Activated naive CD4-positive, alpha-beta T cell treated with anti-CD3 and anti-CD28 coated beads for 36 hours (primary cell): ENCODE measurements at regions of chr1 and their contacts with region 1.

Region 1: GRCh38 chr1:200336111-200336845 is 73.6 kb downstream of the ZNF281 start:
- DNase-seq: no peak
- H3K4me3 Mint-ChIP-seq: no peak overlapping the region
- H3K27ac Mint-ChIP-seq: no peak overlapping the region
- H3K4me1 Mint-ChIP-seq: peaks cover 24% of the 10 kb centered on the region
- H3K27me3 Mint-ChIP-seq: no peaks in the 10 kb centered on the region

Region 2: DNA sequence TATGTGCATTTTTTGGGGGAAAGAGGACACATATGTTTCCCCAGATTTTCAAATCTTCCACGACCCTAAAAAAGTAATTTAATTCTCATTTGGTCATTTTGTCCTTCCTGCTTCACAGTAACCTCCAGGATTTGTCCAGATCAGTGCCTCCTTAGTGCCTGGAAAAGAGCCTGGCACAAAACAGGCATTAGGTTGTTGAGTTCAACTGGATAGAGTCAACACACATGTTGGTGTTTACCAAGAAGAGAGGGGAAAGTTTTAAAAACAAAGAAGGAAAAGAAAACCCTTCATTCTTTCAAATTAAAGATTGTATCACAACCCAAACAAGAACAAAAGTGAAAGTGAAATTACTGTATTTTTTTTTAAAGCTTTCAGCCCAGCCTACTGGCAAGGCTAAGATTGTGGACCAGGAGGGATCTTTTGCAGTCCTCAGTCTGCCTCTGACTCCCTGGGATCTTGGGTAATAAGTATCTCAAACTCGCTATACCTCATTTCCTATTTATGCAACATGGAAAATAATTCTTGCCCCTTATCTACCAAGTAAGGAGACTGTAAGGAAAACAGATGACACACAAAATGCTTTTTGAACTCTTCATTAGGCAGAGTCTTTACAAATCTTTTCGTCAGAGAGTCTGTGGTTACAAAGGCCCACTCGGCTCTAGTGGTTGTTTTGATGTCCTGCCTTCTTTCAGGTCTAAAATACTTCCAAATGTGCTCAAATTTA is 15.7 kb after region 1 on chr1:
- CTCF ChIA-PET with region 1: interaction called, 4 read pairs
- intact Hi-C with region 1: loop called (anchors 1 kb)
- DNase-seq: peak; percentile 46
- H3K4me3 Mint-ChIP-seq: peak overlapping the region; percentile 29
- H3K27ac Mint-ChIP-seq: peak overlapping the region; percentile 43
- H3K4me1 Mint-ChIP-seq: peaks cover 33% of the 10 kb centered on the region
- H3K27me3 Mint-ChIP-seq: no peaks in the 10 kb centered on the region

Region 3: DNA sequence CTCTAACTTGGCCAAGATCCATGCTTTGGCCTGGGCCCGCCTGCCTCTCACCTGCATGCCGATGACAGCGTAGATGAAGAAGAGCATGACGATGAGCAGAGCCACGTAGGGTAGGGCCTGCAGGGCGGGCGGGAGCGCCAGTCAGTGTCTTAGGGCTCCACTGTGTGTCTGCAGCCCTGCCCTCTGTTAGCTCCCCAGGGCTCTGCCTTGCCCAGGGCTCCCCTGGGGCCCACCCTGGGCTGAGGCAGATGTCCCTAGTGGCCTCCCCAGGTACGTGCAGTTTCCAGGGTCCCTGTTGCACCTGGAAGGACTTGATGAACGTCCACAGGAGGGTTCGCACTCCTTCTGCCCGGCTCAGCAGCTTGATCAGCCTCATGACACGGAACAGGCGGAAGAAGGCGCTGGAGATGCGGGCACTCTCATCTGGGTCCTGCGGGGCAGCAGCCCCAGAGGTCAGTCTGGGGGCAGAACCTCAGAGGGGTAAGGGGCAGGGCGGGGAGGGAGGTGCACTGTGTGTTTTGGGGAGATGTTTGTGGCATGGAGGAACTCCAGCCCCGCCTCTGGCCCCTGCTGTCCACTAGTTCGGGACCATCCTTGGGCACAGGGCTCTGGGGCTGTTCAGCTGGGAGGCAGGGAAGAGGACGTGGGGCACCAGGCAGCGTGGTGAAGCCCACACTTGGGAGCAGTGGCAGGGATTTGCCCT is 717.0 kb after region 1 on chr1:
- CTCF ChIA-PET with region 1: no interaction called
- intact Hi-C with region 1: loop called (anchors 2 kb)
- DNase-seq: no peak
- H3K4me3 Mint-ChIP-seq: no peak overlapping the region
- H3K27ac Mint-ChIP-seq: no peak overlapping the region
- H3K4me1 Mint-ChIP-seq: peaks cover 13% of the 10 kb centered on the region
- H3K27me3 Mint-ChIP-seq: no peaks in the 10 kb centered on the region